Tibial artery (tissue), 4 donors: ENCODE measurements at regions of chr5 and their contacts with region 1.

Region 1: DNA sequence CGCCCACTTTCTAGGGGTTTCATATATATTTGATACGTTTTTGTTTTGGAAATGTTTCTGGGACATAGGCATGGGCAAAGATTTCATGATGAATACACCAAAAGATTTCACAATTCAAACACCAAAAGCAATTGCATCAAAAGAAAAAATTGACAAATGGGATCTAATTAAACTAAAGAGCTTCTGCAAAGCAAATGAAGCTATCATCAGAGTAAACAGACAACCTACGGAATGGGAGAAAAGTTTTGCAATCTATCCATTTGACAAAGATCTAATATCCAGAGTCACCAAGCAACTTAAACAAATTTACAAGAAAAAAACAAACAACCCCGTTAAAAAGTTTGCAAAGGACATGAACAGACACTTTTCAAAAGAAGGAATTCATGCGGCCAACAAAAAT is 155.6 kb upstream of the FGF10 start:
- DNase-seq: no peak
- H3K4me3 ChIP-seq: no peak overlapping the region
- H3K27ac ChIP-seq: no peak overlapping the region
- H3K4me1 ChIP-seq: peaks cover 0 to 10% (median 0%) of the 10 kb centered on the region in 4 donors
- H3K27me3 ChIP-seq: no peaks in the 10 kb centered on the region
- CTCF ChIP-seq: no peak

Region 2: GRCh38 chr5:43685252-43685950 is 859.5 kb before region 1 on chr5:
- intact Hi-C with region 1: no loop called
- DNase-seq: no peak
- H3K4me3 ChIP-seq: no peak overlapping the region
- H3K27ac ChIP-seq: peak overlapping the region; percentile 79 to 85
- H3K4me1 ChIP-seq: peaks cover 0 to 69% (median 21%) of the 10 kb centered on the region in 4 donors
- H3K27me3 ChIP-seq: no peaks in the 10 kb centered on the region
- CTCF ChIP-seq: no peak

Region 3: DNA sequence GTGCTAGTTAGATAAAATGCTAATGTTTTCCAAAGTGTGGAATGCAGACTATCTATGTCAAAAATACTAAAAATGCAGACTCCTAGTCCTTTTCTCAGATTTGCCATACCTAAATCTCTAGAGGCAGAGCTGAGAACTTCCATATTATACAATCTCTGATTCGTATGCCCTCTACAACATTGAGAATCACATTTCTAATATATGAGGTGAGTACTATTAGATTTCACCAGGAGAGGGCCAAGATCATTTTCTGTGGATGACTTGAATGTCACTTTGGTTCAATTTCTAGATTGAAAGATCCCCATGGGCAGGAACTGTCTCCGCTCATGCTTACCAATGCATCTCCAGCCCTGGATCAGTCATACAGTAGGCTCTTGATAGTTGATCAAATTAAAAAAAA is 29.4 kb before region 1 on chr5:
- intact Hi-C with region 1: loop called (anchors 2 kb)
- DNase-seq: no peak
- H3K4me3 ChIP-seq: no peak overlapping the region
- H3K27ac ChIP-seq: no peak overlapping the region
- H3K4me1 ChIP-seq: no peaks in the 10 kb centered on the region
- H3K27me3 ChIP-seq: no peaks in the 10 kb centered on the region
- CTCF ChIP-seq: no peak